A549 (cell line): ENCODE measurements at regions of chr10 and their contacts with region 1.

Region 1: DNA sequence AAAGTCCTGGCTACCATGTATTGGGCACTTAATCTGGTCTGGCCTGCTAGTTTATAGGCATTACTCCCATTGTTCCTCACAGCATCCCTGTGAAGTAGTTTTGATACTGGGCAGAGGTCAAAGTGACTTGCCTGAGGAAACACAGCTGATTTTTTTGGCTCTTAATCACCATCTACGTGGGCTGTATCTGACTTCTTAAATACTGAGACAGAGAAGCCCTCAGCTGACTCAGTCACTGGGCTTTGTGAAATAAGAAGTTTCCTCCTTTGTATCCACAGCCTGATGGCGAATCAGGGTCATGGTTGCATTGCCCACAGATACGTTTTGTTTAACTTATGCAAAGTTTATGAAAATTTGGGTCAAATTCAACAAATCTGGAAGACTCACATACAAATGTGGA is 13.2 kb downstream of the TACR2 start:
- DNase-seq: no peak
- ATAC-seq: no peak
- H3K4me3 ChIP-seq: no peak overlapping the region
- H3K27ac ChIP-seq: no peak overlapping the region
- H3K4me1 ChIP-seq: peaks cover 8% of the 10 kb centered on the region
- CTCF ChIP-seq: no peak
- EP300 ChIP-seq: no peak
- POLR2A ChIP-seq: no peak
- RAD21 ChIP-seq: no peak

Region 2: GRCh38 chr10:69360485-69361324 is 42.8 kb before region 1 on chr10:
- CTCF ChIA-PET with region 1: no interaction called
- POLR2A ChIA-PET with region 1: no interaction called
- DNase-seq: peak; percentile 83 to 94
- ATAC-seq: peak; percentile 96 to 97
- H3K4me3 ChIP-seq: no peak overlapping the region
- H3K27ac ChIP-seq: peak overlapping the region; percentile 84 to 85
- H3K4me1 ChIP-seq: peaks cover 51% of the 10 kb centered on the region
- CTCF ChIP-seq: no peak
- EP300 ChIP-seq: no peak; a peak in 1 of 5 replicates
- POLR2A ChIP-seq: no peak
- RAD21 ChIP-seq: no peak; a peak in 1 of 5 replicates

Region 3: GRCh38 chr10:69392481-69393000 is 11.0 kb before region 1 on chr10:
- CTCF ChIA-PET with region 1: interaction called, 77 read pairs
- POLR2A ChIA-PET with region 1: interaction called, 4 read pairs
- DNase-seq: peak; percentile 85 to 87
- ATAC-seq: peak; percentile 86 to 94
- H3K4me3 ChIP-seq: no peak overlapping the region
- H3K27ac ChIP-seq: peak overlapping the region; percentile 48 to 72; a peak in 4 of 6 replicates
- H3K4me1 ChIP-seq: peaks cover 21% of the 10 kb centered on the region
- CTCF ChIP-seq: peak; percentile 94
- EP300 ChIP-seq: no peak
- POLR2A ChIP-seq: no peak
- RAD21 ChIP-seq: peak; percentile 99